ENCODE measurements at regions of chr6 and their contacts with region 1.

Region 1: GRCh38 chr6:105992315-105992961 is 93.7 kb upstream of the PRDM1 start:
- DNase-seq: peak; percentile 90
- H3K4me3 Mint-ChIP-seq: peak overlapping the region; percentile 88
- H3K27ac Mint-ChIP-seq: peak overlapping the region; percentile 74
- H3K4me1 Mint-ChIP-seq: peaks cover 22% of the 10 kb centered on the region
- H3K27me3 Mint-ChIP-seq: peaks cover 72% of the 10 kb centered on the region

Region 2: GRCh38 chr6:105733565-105734162 is 258.8 kb before region 1 on chr6:
- CTCF ChIA-PET with region 1: no interaction called
- intact Hi-C with region 1: loop called (anchors 2 kb)
- DNase-seq: no peak
- H3K4me3 Mint-ChIP-seq: no peak overlapping the region
- H3K27ac Mint-ChIP-seq: no peak overlapping the region
- H3K4me1 Mint-ChIP-seq: peaks cover 3% of the 10 kb centered on the region
- H3K27me3 Mint-ChIP-seq: no peaks in the 10 kb centered on the region

Region 3: GRCh38 chr6:105880030-105880492 is 112.4 kb before region 1 on chr6:
- CTCF ChIA-PET with region 1: no interaction called
- intact Hi-C with region 1: loop called (anchors 1 kb)
- DNase-seq: peak; percentile 74
- H3K4me3 Mint-ChIP-seq: peak overlapping the region; percentile 11
- H3K27ac Mint-ChIP-seq: peak overlapping the region; percentile 78
- H3K4me1 Mint-ChIP-seq: peaks cover 25% of the 10 kb centered on the region
- H3K27me3 Mint-ChIP-seq: peaks cover 30% of the 10 kb centered on the region

Region 4: GRCh38 chr6:106085984-106086813 is 93.8 kb after region 1 on chr6 and contains the start of gene PRDM1:
- CTCF ChIA-PET with region 1: interaction called, 6 read pairs
- intact Hi-C with region 1: loop called (anchors 1 kb)
- DNase-seq: peak; percentile 87
- H3K4me3 Mint-ChIP-seq: peak within 1 kb of the TSS; percentile 75
- H3K27ac Mint-ChIP-seq: peak within 1 kb of the TSS; percentile 6
- H3K4me1 Mint-ChIP-seq: peaks cover 51% of the 10 kb centered on the region
- H3K27me3 Mint-ChIP-seq: peaks cover 46% of the 10 kb centered on the region
- total RNA-seq, gene PRDM1: 3.4 to 4.0 TPM

Region 5: GRCh38 chr6:106194949-106195921 is 202.8 kb after region 1 on chr6:
- CTCF ChIA-PET with region 1: interaction called, 3 read pairs
- intact Hi-C with region 1: loop called (anchors 2 kb)
- DNase-seq: no peak
- H3K4me3 Mint-ChIP-seq: peak overlapping the region; percentile 59
- H3K27ac Mint-ChIP-seq: peak overlapping the region; percentile 88
- H3K4me1 Mint-ChIP-seq: peaks cover 38% of the 10 kb centered on the region
- H3K27me3 Mint-ChIP-seq: no peaks in the 10 kb centered on the region